Transverse colon (tissue), 4 donors: ENCODE measurements at regions of chr19 and their contacts with region 1.

Region 1: DNA sequence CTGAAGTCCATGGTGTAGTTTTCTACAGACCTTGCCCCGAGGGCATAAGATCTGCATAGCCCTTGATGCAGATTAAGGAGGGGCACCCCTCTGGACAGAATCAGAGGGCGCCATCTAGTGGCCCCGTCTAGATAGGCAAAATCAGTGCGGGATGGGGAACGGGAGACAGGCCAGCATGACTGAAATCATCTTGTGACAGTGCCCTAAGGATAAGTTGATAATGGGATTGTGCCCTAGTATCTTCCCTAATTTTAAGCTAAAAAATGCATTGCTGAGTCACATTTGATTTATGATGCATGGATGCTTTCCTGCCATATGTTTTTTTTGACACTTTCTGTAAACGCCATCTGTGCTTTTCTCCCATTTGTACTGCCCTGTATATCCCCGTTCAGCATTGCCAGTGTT is 19.0 kb upstream of the GPI start:
- DNase-seq: peak; percentile 81
- H3K4me3 ChIP-seq: no peak overlapping the region
- H3K27ac ChIP-seq: no peak overlapping the region
- H3K4me1 ChIP-seq: no peaks in the 10 kb centered on the region
- H3K27me3 ChIP-seq: no peaks in the 10 kb centered on the region
- CTCF ChIP-seq: peak; percentile 62 to 83 (median 73)
- EP300 ChIP-seq: no peak
- POLR2A ChIP-seq: no peak

Region 2: GRCh38 chr19:33982706-33983105 is 363.2 kb before region 1 on chr19:
- in situ Hi-C with region 1: no loop called
- intact Hi-C with region 1: no loop called
- DNase-seq: no peak
- H3K4me3 ChIP-seq: no peak overlapping the region
- H3K27ac ChIP-seq: no peak overlapping the region
- H3K4me1 ChIP-seq: no peaks in the 10 kb centered on the region
- H3K27me3 ChIP-seq: no peaks in the 10 kb centered on the region
- CTCF ChIP-seq: peak in 2 of 5 experiments; percentile 11 to 22
- EP300 ChIP-seq: no peak
- POLR2A ChIP-seq: no peak

Region 3: GRCh38 chr19:34220472-34221063 is 125.4 kb before region 1 on chr19:
- in situ Hi-C with region 1: loop called in 3 of 4 experiments (anchors 10 to 25 kb)
- intact Hi-C with region 1: no loop called
- DNase-seq: peak; percentile 65
- H3K4me3 ChIP-seq: no peak overlapping the region
- H3K27ac ChIP-seq: no peak overlapping the region
- H3K4me1 ChIP-seq: peaks cover 0 to 23% (median 1%) of the 10 kb centered on the region in 4 donors
- H3K27me3 ChIP-seq: no peaks in the 10 kb centered on the region
- CTCF ChIP-seq: peak; percentile 59 to 69 (median 62)
- EP300 ChIP-seq: no peak
- POLR2A ChIP-seq: no peak

Region 4: DNA sequence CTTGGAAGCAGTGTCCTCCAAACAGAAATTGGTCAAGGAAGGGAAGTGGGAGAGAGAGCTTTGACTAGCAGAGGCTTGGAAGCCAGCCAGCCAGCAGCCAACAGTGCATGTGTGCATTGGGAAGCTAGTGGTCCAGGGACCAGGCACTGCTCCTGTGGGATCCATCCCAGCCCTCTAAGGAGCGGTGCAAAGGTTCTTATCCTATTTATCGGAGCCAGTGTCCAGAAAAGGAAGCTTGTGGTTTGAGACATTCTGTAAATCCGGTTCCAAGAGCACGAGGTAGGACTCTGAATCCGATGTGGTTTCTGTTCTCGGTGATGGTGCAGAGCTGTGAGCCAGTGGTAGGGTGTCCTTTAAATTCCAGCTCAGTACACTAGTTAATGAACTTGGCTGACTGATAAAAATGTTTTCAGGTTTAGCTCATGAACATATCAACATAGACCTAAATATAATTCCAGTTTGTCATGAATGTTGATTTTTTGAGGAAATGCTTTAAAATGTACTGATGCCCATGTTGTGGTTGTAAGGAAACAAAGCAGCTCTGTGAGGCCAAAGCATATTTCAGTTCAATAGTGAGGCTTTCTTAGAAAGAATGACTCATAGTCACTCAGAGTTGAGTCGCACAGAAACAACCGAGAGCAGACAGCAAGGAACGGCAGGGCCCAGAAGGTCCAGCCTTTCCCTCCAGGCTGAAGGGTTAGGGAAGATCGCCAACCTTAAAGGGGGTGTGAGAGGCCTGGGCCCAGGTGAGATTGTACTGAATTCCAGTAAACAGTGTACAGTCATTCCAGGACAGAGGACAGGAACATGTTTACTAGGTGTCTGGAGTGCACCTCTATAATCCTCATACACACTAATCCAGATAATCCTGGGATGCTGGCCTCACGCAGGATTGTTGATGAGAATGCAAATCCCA is 113.1 kb before region 1 on chr19:
- in situ Hi-C with region 1: loop called in 3 of 4 experiments (anchors 10 to 25 kb)
- intact Hi-C with region 1: no loop called
- DNase-seq: no peak
- H3K4me3 ChIP-seq: no peak overlapping the region
- H3K27ac ChIP-seq: peak overlapping the region; percentile 0 to 70 (median 48)
- H3K4me1 ChIP-seq: peaks cover 0 to 14% (median 11%) of the 10 kb centered on the region in 4 donors
- H3K27me3 ChIP-seq: no peaks in the 10 kb centered on the region
- CTCF ChIP-seq: no peak
- EP300 ChIP-seq: no peak
- POLR2A ChIP-seq: no peak

Region 5: GRCh38 chr19:34327851-34328250 is 18.1 kb before region 1 on chr19:
- in situ Hi-C with region 1: no loop called
- intact Hi-C with region 1: no loop called
- DNase-seq: no peak
- H3K4me3 ChIP-seq: no peak overlapping the region
- H3K27ac ChIP-seq: no peak overlapping the region
- H3K4me1 ChIP-seq: no peaks in the 10 kb centered on the region
- H3K27me3 ChIP-seq: no peaks in the 10 kb centered on the region
- CTCF ChIP-seq: no peak
- EP300 ChIP-seq: no peak
- POLR2A ChIP-seq: no peak

Region 6: DNA sequence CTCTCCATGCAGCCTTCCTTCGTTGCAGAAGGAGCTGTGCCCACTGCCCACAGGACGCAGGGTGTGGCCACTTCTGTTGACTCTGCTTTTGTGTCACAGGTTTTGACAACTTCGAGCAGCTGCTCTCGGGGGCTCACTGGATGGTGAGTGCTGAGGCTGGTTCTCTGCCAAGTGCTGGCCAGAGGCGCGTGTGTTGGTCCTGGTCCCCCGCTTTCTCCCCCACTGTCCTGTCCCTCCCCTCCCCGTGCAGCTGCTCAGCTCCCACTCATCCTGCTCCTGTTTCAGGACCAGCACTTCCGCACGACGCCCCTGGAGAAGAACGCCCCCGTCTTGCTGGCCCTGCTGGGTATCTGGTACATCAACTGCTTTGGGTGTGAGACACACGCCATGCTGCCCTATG is 47.7 kb after region 1 on chr19:
- in situ Hi-C with region 1: no loop called
- intact Hi-C with region 1: no loop called
- DNase-seq: no peak
- H3K4me3 ChIP-seq: no peak overlapping the region
- H3K27ac ChIP-seq: no peak overlapping the region
- H3K4me1 ChIP-seq: no peaks in the 10 kb centered on the region
- H3K27me3 ChIP-seq: no peaks in the 10 kb centered on the region
- CTCF ChIP-seq: no peak
- EP300 ChIP-seq: no peak
- POLR2A ChIP-seq: no peak